ENCODE measurements at regions of chr2 and their contacts with region 1.

Region 1: DNA sequence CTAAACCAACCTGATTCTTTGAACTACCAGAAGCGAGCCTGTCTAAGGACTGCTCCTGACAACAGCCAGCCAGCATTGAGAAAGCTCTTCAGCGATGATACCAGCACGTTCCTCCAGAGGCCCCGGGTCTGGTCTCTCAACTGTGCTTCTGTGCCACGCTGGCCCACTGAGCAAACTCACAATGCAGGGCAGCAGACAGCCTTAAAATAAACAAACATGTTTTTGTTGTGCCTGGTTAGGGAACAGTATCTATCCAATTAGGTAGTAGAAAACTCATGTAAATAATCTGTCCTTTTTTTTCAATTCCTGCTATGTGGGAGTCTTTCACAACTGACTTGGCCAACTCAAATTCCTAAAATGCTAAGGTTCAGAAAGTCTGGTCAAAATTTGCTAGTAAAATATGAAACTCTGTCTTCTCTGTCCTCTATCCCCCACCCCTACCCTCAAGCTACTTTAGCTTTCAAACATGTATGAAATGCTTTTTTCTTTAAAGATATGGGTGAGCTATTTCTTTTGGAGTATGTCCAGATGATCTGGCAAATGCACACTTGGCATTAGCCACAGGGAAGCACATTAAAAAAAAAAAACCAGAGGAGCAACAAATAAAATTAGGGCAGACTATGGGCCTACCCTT is 21.4 kb upstream of the EML4 start:
- DNase-seq: peak; percentile 44
- ATAC-seq: peak; percentile 95
- H3K4me3 ChIP-seq: peak overlapping the region in 1 of 3 experiments; percentile 18; a peak in 2 of 6 replicates
- H3K27ac ChIP-seq: peak overlapping the region; percentile 50
- H3K4me1 ChIP-seq: peaks cover 56% of the 10 kb centered on the region
- H3K27me3 ChIP-seq: no peaks in the 10 kb centered on the region
- CTCF ChIP-seq: 0 out of 2 replicates have a peak, but pooled peaks have one; percentile 4
- EP300 ChIP-seq: no peak
- POLR2A ChIP-seq: 0 out of 4 replicates have a peak, but pooled peaks of 1 of the 2 experiments have one; percentile 25
- RAD21 ChIP-seq: no peak

Region 2: DNA sequence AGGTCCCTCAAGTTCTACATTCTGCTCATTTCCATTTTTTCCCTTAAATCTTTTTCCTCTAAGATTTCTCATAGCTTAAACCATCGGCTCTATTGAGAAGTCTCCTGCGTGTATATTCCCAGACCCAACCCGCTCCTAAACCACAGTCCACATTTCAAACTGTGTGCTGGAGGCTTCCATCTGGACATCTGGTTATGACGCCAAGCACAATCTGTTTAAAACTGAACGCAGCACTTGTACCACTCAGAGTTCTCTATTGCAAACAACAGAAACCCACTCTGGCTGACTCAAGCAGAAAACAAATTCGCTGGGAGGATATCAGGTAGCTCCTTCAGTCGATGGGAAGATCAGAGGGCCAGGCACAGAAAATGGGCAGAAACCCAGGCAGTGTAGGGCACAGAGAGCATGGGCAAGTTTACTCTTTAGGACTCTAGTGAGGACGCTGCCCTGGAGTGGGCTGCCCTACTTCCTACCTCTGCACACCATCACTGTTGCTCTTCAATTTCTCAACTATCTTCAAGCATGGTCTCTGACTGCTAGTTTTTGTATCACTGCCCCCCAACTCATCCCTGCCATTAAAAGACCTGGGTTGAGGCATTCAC is 15.8 kb after region 1 on chr2:
- CTCF ChIA-PET with region 1: no interaction called
- POLR2A ChIA-PET with region 1: interaction called, 18 read pairs
- in situ Hi-C with region 1: no loop called
- intact Hi-C with region 1: loop called (anchors 2 kb)
- DNase-seq: no peak
- ATAC-seq: peak; percentile 44
- H3K4me3 ChIP-seq: no peak overlapping the region
- H3K27ac ChIP-seq: no peak overlapping the region
- H3K4me1 ChIP-seq: peaks cover 48% of the 10 kb centered on the region
- H3K27me3 ChIP-seq: no peaks in the 10 kb centered on the region
- CTCF ChIP-seq: no peak
- EP300 ChIP-seq: no peak
- POLR2A ChIP-seq: no peak
- RAD21 ChIP-seq: no peak

Region 3: DNA sequence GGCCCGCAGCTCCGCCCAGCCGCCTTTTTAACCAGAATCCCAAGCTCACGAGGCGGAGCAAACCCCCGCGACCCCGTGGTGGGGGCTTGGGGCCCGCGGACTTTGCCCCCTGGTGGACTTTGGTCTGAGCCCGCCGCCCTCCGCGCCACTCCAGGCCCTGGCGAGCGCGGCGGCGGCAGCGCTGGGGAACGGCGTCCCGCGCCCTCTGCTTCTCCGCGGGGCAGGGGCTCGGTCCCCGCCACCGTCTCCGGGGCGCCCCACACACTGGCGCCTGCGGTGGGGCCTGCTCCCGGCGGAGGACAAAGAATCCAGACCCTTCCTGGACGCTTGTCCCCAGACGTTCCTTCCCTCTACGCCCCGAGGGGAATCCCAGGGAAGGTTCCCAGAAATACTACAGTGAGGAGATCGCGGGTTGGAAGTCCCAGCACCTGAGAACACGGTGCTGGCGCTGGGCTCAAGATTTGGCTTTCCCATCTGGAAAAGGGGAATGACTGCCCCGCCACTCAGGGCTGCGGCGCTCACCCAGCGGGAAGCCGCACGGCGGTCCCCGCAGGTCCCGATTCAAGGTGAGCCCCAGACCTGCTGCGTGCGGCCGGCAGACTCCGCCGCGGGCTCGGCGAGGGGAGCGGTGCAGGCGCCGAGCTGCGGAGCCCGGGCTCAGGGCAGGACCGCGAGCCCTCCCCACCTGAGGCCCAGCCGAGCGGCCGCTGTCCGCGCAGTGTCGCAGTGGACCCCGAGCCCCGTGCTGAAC is 645.0 kb after region 1 on chr2 and contains the start of gene HAAO:
- CTCF ChIA-PET with region 1: no interaction called
- POLR2A ChIA-PET with region 1: no interaction called
- in situ Hi-C with region 1: no loop called
- intact Hi-C with region 1: no loop called
- DNase-seq: peak; percentile 91
- ATAC-seq: peak; percentile 71
- H3K4me3 ChIP-seq: peak within 1 kb of the TSS; percentile 98 to 99 (median 99)
- H3K27ac ChIP-seq: peak within 1 kb of the TSS; percentile 95
- H3K4me1 ChIP-seq: peaks cover 73% of the 10 kb centered on the region
- H3K27me3 ChIP-seq: no peaks in the 10 kb centered on the region; a peak in 1 of 5 replicates
- CTCF ChIP-seq: peak; percentile 55
- EP300 ChIP-seq: peak; percentile 91 to 95
- POLR2A ChIP-seq: peak in 1 of 2 experiments; percentile 97; a peak in 2 of 4 replicates
- RAD21 ChIP-seq: peak; percentile 88
- total RNA-seq, gene HAAO: 34.1 and 42.7 TPM in 2 replicates

Measured in HepG2 (cell line).